Activated B cell treated with CpG ODN at 0.5 μM for 24 hours (primary cell): ENCODE measurements at regions of chr19 and their contacts with region 1.

Region 1: GRCh38 chr19:37594304-37594981 is at the starts of genes ZNF540 and ZNF571:
- DNase-seq: peak; percentile 83
- ATAC-seq: peak; percentile 97
- H3K4me3 Mint-ChIP-seq: peak within 1 kb of the TSS; percentile 98
- H3K27ac Mint-ChIP-seq: peak within 1 kb of the TSS; percentile 97
- H3K4me1 Mint-ChIP-seq: peaks cover 23% of the 10 kb centered on the region
- H3K27me3 Mint-ChIP-seq: no peaks in the 10 kb centered on the region
- CTCF ChIP-seq: no peak
- total RNA-seq, gene ZNF540: 1.9 and 2.9 TPM in 2 replicates
- total RNA-seq, gene ZNF571: 5.0 and 5.2 TPM in 2 replicates

Region 2: DNA sequence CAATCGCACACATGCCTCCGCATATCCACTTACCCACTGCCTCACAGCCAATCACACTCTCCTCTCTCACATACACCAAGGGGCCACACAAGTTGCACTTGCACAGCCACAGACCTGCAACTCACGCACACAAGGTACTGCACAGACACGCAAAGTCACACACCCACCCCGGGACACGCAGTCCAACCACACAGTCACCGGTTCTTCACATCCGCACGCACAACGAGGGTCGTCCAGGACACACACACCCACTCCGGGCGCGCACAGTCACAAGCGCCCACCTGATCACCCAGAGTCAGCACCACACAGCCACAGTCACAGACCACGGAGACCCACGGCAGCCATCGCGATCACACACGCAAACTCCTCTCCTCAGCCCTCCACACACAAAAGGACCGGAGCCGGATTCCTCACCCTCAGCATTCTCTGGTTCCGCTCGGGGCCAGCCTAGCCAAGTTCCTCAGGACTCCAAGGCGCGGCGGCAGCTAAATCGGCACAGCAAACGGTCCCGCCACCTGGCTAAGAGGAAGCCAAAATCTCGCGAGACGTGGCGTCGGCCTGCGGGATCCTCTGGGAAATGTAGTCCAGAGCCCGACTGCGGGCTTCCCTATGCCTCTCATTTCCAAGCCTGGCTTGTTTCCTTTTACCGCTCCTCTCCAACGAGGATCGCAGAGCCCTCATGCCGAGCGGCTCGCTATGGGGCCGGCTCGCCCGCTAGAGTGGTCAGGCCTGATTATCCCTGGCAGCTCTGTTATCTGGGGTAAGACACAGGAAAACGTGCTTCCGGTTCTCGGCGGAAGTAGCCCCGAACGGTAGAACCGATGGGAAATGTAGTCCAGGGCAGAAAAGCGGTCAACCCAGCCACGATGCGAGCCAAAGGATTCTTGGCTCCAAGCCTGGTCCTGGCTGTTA is 821.9 kb before region 1 on chr19 and contains the start of gene ZNF850:
- CTCF ChIA-PET with region 1: no interaction called
- POLR2A ChIA-PET with region 1: no interaction called
- intact Hi-C with region 1: loop called (anchors 5 kb)
- DNase-seq: peak; percentile 89
- ATAC-seq: peak; percentile 92
- H3K4me3 Mint-ChIP-seq: peak within 1 kb of the TSS; percentile 92
- H3K27ac Mint-ChIP-seq: peak within 1 kb of the TSS; percentile 85
- H3K4me1 Mint-ChIP-seq: peaks cover 24% of the 10 kb centered on the region
- H3K27me3 Mint-ChIP-seq: no peaks in the 10 kb centered on the region
- CTCF ChIP-seq: no peak
- total RNA-seq, gene ZNF850: 5.8 and 7.9 TPM in 2 replicates

Region 3: DNA sequence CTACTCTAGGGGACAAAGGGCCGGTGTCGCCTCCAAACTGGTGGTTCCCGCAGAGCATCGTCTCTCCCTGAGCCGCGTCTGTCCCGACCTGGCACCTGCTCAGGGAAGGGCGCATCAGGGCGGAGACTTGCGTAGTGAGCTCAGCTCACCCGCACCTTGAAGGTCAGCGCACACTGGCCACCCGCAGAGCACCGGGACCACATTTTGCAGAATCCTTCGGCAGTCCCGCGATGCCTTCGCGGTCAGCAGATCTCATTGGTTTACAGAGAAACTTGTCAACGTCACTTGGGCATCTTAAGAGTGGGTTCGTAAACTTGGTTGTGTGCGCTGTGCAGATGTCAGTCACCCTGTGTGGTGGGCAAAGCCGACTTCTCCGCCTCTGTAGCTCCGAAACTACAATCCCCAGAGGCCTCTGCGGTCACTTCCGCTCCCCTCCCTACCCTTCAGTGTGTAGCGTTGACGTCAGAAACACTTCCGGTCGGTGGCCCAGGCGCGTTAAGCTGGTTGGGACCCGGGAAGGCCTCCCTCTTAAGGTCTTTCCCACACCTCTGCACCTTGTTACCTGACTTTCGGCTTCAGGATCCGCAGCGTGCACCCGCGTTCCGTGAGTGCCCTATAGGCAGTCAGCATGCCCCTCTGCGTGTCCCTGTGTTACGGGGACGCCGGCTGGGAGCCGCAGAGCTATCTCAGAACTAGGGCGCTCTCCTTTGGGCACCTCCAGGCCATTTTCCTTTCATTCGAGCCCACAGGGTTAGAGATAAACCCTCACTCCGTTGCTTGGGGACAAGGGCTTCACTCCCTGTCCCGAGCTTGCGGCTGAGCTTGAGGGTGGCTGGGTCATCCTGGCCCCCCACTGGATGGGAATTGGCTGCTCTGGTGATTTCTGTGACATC is 260.0 kb before region 1 on chr19:
- CTCF ChIA-PET with region 1: no interaction called
- POLR2A ChIA-PET with region 1: interaction called, 3 read pairs
- intact Hi-C with region 1: loop called (anchors 1 kb)
- DNase-seq: peak; percentile 74
- ATAC-seq: peak; percentile 98
- H3K4me3 Mint-ChIP-seq: peak overlapping the region; percentile 91
- H3K27ac Mint-ChIP-seq: peak overlapping the region; percentile 83
- H3K4me1 Mint-ChIP-seq: peaks cover 28% of the 10 kb centered on the region
- H3K27me3 Mint-ChIP-seq: no peaks in the 10 kb centered on the region
- CTCF ChIP-seq: no peak

Region 4: DNA sequence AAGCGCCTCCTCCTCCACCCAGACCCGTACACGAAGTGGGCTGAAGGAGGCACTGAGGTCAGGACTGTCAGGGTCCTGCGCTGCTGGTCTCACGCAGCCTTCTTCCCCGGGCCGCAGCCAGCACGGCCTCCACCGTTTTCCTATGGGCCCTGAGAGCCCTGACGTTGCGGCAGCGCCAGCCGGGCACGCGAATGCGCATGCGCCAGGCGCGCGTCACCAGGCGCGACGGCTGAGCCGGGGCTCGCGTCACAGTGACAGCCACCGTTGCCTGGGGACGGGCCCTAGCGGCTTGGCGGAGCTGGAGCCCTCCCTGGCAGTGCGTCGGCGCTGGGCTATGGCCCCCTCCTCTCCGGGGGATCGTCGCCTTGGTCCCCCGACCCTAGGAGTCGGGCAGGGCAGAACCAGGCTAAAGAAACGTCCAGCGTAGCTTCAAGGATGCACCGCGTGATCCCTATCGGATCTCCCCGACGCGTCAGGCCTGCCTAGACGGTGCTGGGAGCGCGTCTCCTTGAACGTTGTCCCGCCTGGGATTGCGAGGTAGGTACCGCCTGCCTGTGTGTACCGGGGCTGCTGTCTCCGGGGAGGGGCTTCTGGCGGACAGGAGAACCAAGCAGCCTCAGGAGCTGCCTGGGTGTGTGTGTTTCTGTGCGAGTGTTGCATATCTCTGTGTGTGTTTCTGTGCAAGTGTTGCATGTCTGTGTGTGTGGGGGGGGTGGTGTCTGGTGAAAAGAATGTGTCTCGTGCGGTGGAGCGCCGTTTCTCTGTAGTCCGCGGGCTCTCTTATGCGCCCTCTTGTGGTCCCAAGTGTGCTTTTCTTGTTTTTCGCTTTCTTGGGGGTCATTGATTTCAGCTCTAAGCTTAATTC is 43.1 kb before region 1 on chr19:
- CTCF ChIA-PET with region 1: no interaction called
- POLR2A ChIA-PET with region 1: interaction called, 4 read pairs
- intact Hi-C with region 1: loop called (anchors 2 kb)
- DNase-seq: peak; percentile 70
- ATAC-seq: peak; percentile 85
- H3K4me3 Mint-ChIP-seq: peak overlapping the region; percentile 93
- H3K27ac Mint-ChIP-seq: peak overlapping the region; percentile 91
- H3K4me1 Mint-ChIP-seq: peaks cover 12% of the 10 kb centered on the region
- H3K27me3 Mint-ChIP-seq: no peaks in the 10 kb centered on the region
- CTCF ChIP-seq: no peak

Region 5: GRCh38 chr19:37691881-37692504 is 97.5 kb after region 1 on chr19:
- CTCF ChIA-PET with region 1: no interaction called
- POLR2A ChIA-PET with region 1: interaction called, 8 read pairs
- intact Hi-C with region 1: loop called (anchors 2 kb)
- DNase-seq: peak; percentile 69
- ATAC-seq: peak; percentile 94
- H3K4me3 Mint-ChIP-seq: peak overlapping the region; percentile 94
- H3K27ac Mint-ChIP-seq: peak overlapping the region; percentile 86
- H3K4me1 Mint-ChIP-seq: peaks cover 10% of the 10 kb centered on the region
- H3K27me3 Mint-ChIP-seq: no peaks in the 10 kb centered on the region
- CTCF ChIP-seq: no peak

Region 6: DNA sequence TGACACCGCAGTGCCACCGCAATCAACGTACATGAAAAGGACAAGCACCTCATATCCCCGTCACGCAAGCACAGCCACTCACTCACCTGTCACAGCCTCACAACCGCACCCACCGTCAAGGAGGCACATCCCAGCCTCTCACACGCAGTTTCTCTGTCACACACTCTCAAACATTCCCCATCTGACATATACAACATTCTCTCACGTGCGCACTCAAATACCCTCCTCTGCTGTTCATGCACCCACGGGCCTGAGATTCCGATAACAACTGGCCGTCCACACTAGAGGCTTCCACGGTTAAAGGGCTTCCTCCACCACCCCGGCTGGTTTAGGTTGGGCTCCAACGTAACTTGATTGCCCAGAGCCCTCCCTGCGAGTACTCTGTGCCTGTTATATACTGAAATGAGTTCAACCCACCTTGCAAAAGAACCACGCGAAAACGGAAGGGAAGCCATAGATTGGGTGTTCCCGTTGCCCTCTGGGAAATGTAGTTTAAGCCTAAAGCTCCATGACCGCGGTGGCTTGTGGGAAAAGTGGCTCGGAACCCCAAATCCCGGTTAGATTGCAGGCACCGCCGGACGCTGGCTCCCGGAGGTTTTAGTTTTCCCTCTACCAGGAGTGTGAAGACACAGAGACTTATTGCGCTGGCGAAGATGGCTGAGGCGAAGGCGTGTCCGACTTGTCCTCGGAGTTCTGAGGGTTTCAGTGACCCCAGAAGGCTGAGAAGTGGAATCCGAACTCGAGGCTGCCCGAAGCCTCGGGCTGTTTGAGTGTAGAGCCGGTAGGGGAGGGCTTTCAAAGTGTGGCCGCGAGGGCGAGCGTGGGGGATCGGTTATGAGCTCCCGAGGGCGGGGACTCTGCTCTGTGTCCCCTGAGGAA is 184.9 kb after region 1 on chr19 and contains the start of gene ZNF573:
- CTCF ChIA-PET with region 1: no interaction called
- POLR2A ChIA-PET with region 1: interaction called, 13 read pairs
- intact Hi-C with region 1: loop called (anchors 1 kb)
- DNase-seq: peak; percentile 70
- ATAC-seq: peak; percentile 86
- H3K4me3 Mint-ChIP-seq: peak within 1 kb of the TSS; percentile 91
- H3K27ac Mint-ChIP-seq: peak within 1 kb of the TSS; percentile 96
- H3K4me1 Mint-ChIP-seq: peaks cover 31% of the 10 kb centered on the region
- H3K27me3 Mint-ChIP-seq: no peaks in the 10 kb centered on the region
- CTCF ChIP-seq: no peak
- total RNA-seq, gene ZNF573: 18.7 and 19.8 TPM in 2 replicates